Sciatic nerve (tissue), 2 donors: ENCODE measurements at regions of chr13 and their contacts with region 1.

Region 1: GRCh38 chr13:40666045-40666904 is at the start of gene FOXO1:
- DNase-seq: peak; percentile 94
- ATAC-seq: peak; percentile 90
- total RNA-seq, gene FOXO1: 57.5 TPM

Region 2: DNA sequence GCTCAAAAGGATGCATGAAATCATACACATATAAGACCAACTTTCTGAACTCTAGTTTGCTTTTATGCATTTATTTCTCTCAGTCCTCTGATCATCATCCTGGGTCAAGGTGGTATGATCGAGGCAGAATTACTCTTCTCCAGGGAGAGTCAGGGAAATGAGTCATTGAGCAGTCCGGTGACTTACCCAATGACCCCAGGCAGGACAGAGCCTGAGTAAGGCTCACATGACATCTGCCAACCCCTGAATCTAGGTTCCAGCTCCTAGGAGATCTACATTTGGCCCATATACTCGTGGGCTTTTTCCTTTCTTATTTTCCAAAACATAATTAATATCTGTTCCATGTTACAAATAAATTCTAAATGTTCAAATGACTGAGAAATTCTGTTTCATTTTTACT is 502.1 kb before region 1 on chr13:
- intact Hi-C with region 1: no loop called
- DNase-seq: no peak
- ATAC-seq: peak; percentile 69

Region 3: DNA sequence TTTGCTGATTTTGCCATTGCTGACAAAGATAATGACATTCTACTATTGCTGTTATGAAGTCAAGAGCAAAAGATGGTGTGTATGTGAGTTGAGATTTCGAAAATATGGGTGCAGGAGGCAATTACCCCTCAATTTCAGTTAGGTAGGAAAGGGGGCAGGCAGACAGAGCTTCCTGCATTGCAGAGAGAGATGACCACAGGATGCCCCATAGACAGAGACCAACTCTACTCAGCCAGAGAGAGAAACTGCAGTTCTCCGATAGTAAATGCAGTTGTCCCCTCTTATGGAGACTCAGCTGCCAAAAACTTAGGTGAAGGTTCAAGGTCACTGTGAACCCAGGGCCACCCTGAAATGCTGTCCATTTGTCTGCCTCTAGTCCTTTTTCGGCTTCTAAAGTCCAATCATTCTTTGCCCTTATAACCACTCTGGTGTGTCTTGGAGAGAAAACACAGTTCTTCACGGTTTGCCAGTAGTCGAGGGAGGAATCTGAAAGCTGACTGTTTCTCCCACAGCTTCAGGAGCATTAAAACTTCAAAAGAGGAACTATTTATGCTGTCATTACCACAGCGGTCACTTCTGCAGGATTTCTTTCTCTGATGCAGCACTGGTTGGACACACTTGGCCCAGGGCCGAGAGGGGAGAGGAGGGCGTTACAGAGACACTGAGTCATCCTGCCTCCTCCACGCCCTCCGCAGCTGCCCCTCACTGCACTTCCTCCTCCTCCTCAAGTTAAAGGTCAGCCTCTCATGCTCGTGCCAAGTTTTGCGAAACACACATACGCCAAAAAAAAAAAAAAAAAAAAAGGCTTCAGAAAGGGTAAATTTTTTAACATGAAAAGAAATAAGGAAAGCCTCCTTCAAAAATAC is 264.1 kb before region 1 on chr13:
- intact Hi-C with region 1: loop called (anchors 10 kb)
- DNase-seq: peak; percentile 97
- ATAC-seq: peak; percentile 99

Region 4: GRCh38 chr13:40485611-40486517 is 180.4 kb before region 1 on chr13:
- intact Hi-C with region 1: loop called (anchors 10 kb)
- DNase-seq: no peak
- ATAC-seq: peak; percentile 20

Region 5: GRCh38 chr13:40596484-40596883 is 69.8 kb before region 1 on chr13:
- intact Hi-C with region 1: no loop called
- DNase-seq: no peak
- ATAC-seq: no peak